ENCODE measurements at regions of chr22 and their contacts with region 1.

Region 1: GRCh38 chr22:30005213-30005857 is 74.9 kb upstream of the HORMAD2 start:
- H3K4me3 ChIP-seq: no peak overlapping the region
- H3K27ac ChIP-seq: no peak overlapping the region
- H3K4me1 ChIP-seq: no peaks in the 10 kb centered on the region
- CTCF ChIP-seq: peak; percentile 71

Region 2: GRCh38 chr22:29689880-29690213 is 315.5 kb before region 1 on chr22:
- CTCF ChIA-PET with region 1: interaction called, 43 read pairs
- POLR2A ChIA-PET with region 1: no interaction called
- H3K4me3 ChIP-seq: no peak overlapping the region
- H3K27ac ChIP-seq: no peak overlapping the region
- H3K4me1 ChIP-seq: peaks cover 4% of the 10 kb centered on the region; the same call in 1 of the 2 replicates
- CTCF ChIP-seq: peak; percentile 89

Region 3: GRCh38 chr22:29797351-29797750 is 208.0 kb before region 1 on chr22:
- CTCF ChIA-PET with region 1: interaction called, 12 read pairs
- POLR2A ChIA-PET with region 1: no interaction called
- H3K4me3 ChIP-seq: no peak overlapping the region
- H3K27ac ChIP-seq: no peak overlapping the region
- H3K4me1 ChIP-seq: no peaks in the 10 kb centered on the region
- CTCF ChIP-seq: no peak

Region 4: GRCh38 chr22:29907815-29908515 is 97.4 kb before region 1 on chr22:
- CTCF ChIA-PET with region 1: interaction called, 16 read pairs
- POLR2A ChIA-PET with region 1: interaction called, 3 read pairs
- H3K4me3 ChIP-seq: peak overlapping the region; percentile 28
- H3K27ac ChIP-seq: peak overlapping the region; percentile 84
- H3K4me1 ChIP-seq: peaks cover 31% of the 10 kb centered on the region
- CTCF ChIP-seq: no peak

Region 5: GRCh38 chr22:30015846-30016245 is 10.5 kb after region 1 on chr22:
- CTCF ChIA-PET with region 1: interaction called, 40 read pairs
- POLR2A ChIA-PET with region 1: no interaction called
- H3K4me3 ChIP-seq: no peak overlapping the region
- H3K27ac ChIP-seq: no peak overlapping the region
- H3K4me1 ChIP-seq: no peaks in the 10 kb centered on the region
- CTCF ChIP-seq: no peak

Region 6: GRCh38 chr22:30044369-30044768 is 39.0 kb after region 1 on chr22:
- CTCF ChIA-PET with region 1: no interaction called
- POLR2A ChIA-PET with region 1: no interaction called
- H3K4me3 ChIP-seq: no peak overlapping the region
- H3K27ac ChIP-seq: peak overlapping the region; percentile 4
- H3K4me1 ChIP-seq: peaks cover 21% of the 10 kb centered on the region
- CTCF ChIP-seq: no peak

Region 7: GRCh38 chr22:30079952-30080533 is 74.7 kb after region 1 on chr22 and contains the start of gene HORMAD2:
- CTCF ChIA-PET with region 1: interaction called, 11 read pairs
- POLR2A ChIA-PET with region 1: no interaction called
- H3K4me3 ChIP-seq: no peak within 1 kb of the TSS
- H3K27ac ChIP-seq: no peak within 1 kb of the TSS
- H3K4me1 ChIP-seq: peaks cover 6% of the 10 kb centered on the region
- CTCF ChIP-seq: no peak

Region 8: DNA sequence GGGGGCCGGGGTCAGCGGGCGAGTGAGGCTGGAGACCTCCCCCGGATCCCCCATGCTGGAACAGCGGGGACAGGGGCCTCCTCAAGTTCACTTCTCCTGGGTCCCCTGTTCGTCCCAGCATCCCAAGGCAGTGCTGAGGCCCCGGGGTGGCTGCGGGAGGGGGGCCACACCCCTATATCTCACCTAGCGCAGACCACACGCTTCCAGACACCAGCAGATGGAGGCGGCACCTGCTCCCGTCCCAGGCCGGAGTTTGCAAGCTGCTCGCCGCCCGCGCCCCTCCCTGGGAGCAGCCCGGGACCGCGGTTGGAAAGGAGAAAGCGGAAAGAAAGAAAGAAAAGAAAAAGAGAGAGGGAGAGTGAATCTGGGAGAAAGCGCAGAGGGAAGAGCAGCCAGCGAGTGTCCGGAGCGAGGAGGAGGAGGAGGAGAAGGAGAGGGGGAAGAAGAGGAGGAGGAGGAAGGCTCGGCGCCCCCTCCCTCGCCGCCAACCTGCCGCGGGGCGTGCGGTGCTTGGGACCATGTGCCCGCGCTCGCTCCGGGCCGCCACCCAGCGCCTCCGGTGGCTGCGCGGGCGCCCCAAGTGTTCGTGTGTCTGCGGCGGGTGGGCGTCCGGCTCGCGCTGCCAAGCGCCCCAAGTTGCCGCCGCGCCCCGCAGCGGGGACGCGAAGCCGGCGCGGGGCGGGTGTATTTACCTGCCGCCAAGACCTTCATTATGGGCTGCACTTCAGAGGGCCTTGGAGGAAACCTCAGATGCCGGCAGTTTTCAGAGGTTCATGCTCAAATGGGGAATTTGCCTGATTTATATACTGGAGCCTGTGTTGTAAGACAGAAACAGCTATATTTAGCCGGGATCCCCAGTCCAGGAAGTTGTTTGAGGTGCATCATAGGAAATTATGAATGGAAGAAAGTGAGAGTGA is 240.9 kb after region 1 on chr22 and contains the start of gene LIF:
- CTCF ChIA-PET with region 1: no interaction called
- POLR2A ChIA-PET with region 1: no interaction called
- H3K4me3 ChIP-seq: peak within 1 kb of the TSS; percentile 56
- H3K27ac ChIP-seq: peak within 1 kb of the TSS; percentile 78; the same call in 1 of the 2 replicates
- H3K4me1 ChIP-seq: peaks cover 3% of the 10 kb centered on the region; the same call in 1 of the 2 replicates
- CTCF ChIP-seq: peak; percentile 84

Measured in HEK293 (cell line).